IMR-90 (cell line): ENCODE measurements at regions of chr4 and their contacts with region 1.

Region 1: DNA sequence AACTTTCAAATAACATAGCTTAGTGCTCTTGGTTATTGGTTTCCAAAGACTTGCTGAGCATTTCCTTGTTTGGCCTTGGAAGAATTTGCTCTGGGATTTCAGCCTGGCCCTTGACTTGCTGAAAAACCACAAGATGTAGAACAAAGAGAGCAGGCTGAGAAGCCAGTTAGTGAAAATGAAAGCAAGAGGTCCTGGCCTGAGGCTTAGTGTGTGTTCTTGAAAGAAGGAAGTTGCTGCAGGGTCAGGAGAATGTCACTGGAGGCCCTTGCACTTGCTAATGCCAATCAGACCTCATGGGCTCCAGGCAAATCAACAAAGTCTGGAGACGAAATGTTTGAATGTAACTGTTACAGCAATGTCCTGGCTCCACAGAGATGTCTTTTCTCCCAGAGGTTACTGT is 79.4 kb downstream of the SYNPO2 start:
- DNase-seq: peak; percentile 87
- ATAC-seq: peak; percentile 75
- H3K4me3 ChIP-seq: no peak overlapping the region
- H3K27ac ChIP-seq: peak overlapping the region; percentile 90
- H3K4me1 ChIP-seq: peaks cover 16% of the 10 kb centered on the region
- H3K27me3 ChIP-seq: no peaks in the 10 kb centered on the region
- CTCF ChIP-seq: no peak
- POLR2A ChIP-seq: no peak
- RAD21 ChIP-seq: no peak

Region 2: GRCh38 chr4:118417325-118417724 is 550.7 kb before region 1 on chr4:
- CTCF ChIA-PET with region 1: no interaction called
- POLR2A ChIA-PET with region 1: no interaction called
- dilution Hi-C with region 1: no loop called
- in situ Hi-C with region 1: no loop called
- intact Hi-C with region 1: loop called (anchors 10 kb)
- DNase-seq: peak; percentile 85
- ATAC-seq: peak; percentile 96
- H3K4me3 ChIP-seq: no peak overlapping the region
- H3K27ac ChIP-seq: peak overlapping the region; percentile 96; the same call in 1 of the 2 replicates
- H3K4me1 ChIP-seq: peaks cover 2% of the 10 kb centered on the region; the same call in 1 of the 2 replicates
- H3K27me3 ChIP-seq: no peaks in the 10 kb centered on the region
- CTCF ChIP-seq: no peak
- POLR2A ChIP-seq: no peak
- RAD21 ChIP-seq: no peak

Region 3: GRCh38 chr4:118740869-118741268 is 227.1 kb before region 1 on chr4:
- CTCF ChIA-PET with region 1: no interaction called
- POLR2A ChIA-PET with region 1: no interaction called
- dilution Hi-C with region 1: no loop called
- in situ Hi-C with region 1: loop called (anchors 10 kb)
- intact Hi-C with region 1: loop called (anchors 1 kb)
- DNase-seq: no peak
- ATAC-seq: no peak
- H3K4me3 ChIP-seq: no peak overlapping the region
- H3K27ac ChIP-seq: no peak overlapping the region
- H3K4me1 ChIP-seq: peaks cover 17% of the 10 kb centered on the region
- H3K27me3 ChIP-seq: no peaks in the 10 kb centered on the region
- CTCF ChIP-seq: peak; percentile 42
- POLR2A ChIP-seq: no peak
- RAD21 ChIP-seq: peak; percentile 24

Region 4: DNA sequence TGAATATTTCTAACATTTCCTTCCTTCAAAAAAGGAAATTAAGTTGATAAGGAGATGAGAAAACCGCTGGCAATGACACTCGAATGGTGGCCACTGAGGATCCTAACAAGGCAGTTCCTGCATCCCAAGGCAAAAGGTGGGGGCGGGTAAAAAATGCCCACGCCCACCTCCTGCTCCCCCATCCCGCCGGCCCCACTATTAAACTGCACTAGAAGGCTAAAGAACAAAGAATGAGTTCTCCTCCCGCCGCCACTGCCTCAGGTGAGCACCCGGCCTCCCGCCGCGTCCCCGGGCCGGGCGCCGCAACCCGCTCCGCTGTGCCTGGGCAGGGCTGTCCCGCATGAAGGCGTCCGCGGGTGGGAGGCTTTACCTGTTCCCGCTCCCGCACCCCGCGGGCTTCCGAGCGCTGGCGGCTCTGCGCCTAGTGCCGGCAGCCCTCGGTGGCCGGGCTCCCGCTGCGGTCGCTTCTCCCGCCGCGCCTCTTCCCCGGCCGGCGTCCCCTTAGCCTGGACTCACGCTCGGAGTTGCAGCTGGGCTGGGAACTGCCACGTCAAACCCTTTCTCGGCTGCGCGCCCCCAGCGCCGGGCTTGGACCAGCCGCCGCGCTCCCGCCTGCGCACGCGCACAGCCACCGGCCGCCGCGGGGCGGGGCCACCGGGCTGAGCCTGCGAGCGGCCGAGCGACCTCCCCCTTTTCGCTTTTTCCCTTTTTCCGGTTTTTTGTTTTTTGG is 132.3 kb before region 1 on chr4 and contains the start of gene SEC24D:
- CTCF ChIA-PET with region 1: no interaction called
- POLR2A ChIA-PET with region 1: no interaction called
- dilution Hi-C with region 1: no loop called
- in situ Hi-C with region 1: no loop called
- intact Hi-C with region 1: loop called (anchors 2 kb)
- DNase-seq: peak; percentile 87
- ATAC-seq: peak; percentile 90
- H3K4me3 ChIP-seq: peak within 1 kb of the TSS; percentile 93
- H3K27ac ChIP-seq: peak within 1 kb of the TSS; percentile 99
- H3K4me1 ChIP-seq: peaks cover 5% of the 10 kb centered on the region
- H3K27me3 ChIP-seq: no peaks in the 10 kb centered on the region
- CTCF ChIP-seq: 0 out of 2 replicates have a peak, but pooled peaks have one; percentile 12
- POLR2A ChIP-seq: peak; percentile 92
- RAD21 ChIP-seq: no peak
- total RNA-seq, gene SEC24D: 93.2 and 98.9 TPM in 2 replicates

Region 5: DNA sequence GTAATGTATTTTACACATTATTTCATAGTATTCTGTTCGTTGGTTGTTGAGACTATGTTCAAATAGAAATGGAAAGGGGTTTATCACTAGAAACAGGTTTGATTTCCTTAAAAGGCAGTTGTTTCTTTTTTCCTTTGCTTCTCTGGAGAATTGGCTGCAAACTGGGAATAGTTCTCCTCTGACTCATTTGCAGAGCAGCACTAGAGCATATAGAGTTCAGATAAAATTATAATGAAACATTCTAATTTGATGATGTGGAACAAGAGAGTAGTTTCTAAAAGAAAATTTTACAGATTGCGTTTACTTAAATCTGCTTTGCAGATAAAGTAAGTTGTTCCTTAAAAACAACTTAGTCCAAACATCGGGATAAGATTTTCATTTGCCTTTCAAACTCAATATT is 49.6 kb before region 1 on chr4:
- CTCF ChIA-PET with region 1: interaction called, 4 read pairs
- POLR2A ChIA-PET with region 1: no interaction called
- dilution Hi-C with region 1: no loop called
- in situ Hi-C with region 1: no loop called
- intact Hi-C with region 1: loop called (anchors 5 kb)
- DNase-seq: peak; percentile 94
- ATAC-seq: peak; percentile 93
- H3K4me3 ChIP-seq: no peak overlapping the region
- H3K27ac ChIP-seq: peak overlapping the region; percentile 64; the same call in 1 of the 2 replicates
- H3K4me1 ChIP-seq: peaks cover 2% of the 10 kb centered on the region
- H3K27me3 ChIP-seq: no peaks in the 10 kb centered on the region
- CTCF ChIP-seq: no peak
- POLR2A ChIP-seq: no peak
- RAD21 ChIP-seq: no peak

Region 6: GRCh38 chr4:119000400-119000799 is 32.4 kb after region 1 on chr4:
- CTCF ChIA-PET with region 1: no interaction called
- POLR2A ChIA-PET with region 1: no interaction called
- dilution Hi-C with region 1: no loop called
- in situ Hi-C with region 1: no loop called
- intact Hi-C with region 1: no loop called
- DNase-seq: peak; percentile 15
- ATAC-seq: peak; percentile 48
- H3K4me3 ChIP-seq: no peak overlapping the region
- H3K27ac ChIP-seq: peak overlapping the region; percentile 7; the same call in 1 of the 2 replicates
- H3K4me1 ChIP-seq: peaks cover 14% of the 10 kb centered on the region
- H3K27me3 ChIP-seq: no peaks in the 10 kb centered on the region
- CTCF ChIP-seq: no peak
- POLR2A ChIP-seq: no peak
- RAD21 ChIP-seq: no peak